ENCODE measurements at regions of chr4 and their contacts with region 1.

Region 1: GRCh38 chr4:78845472-78845871 is 69.3 kb downstream of the BMP2K start:
- DNase-seq: peak; percentile 7 to 59 (median 50)
- H3K4me3 ChIP-seq: peak overlapping the region in 2 of 7 experiments; percentile 28 to 59
- H3K27ac ChIP-seq: peak overlapping the region; percentile 47 to 73
- H3K4me1 ChIP-seq: peaks cover 0 to 4% (median 0%) of the 10 kb centered on the region in 4 experiments
- H3K27me3 ChIP-seq: no peaks in the 10 kb centered on the region

Region 2: DNA sequence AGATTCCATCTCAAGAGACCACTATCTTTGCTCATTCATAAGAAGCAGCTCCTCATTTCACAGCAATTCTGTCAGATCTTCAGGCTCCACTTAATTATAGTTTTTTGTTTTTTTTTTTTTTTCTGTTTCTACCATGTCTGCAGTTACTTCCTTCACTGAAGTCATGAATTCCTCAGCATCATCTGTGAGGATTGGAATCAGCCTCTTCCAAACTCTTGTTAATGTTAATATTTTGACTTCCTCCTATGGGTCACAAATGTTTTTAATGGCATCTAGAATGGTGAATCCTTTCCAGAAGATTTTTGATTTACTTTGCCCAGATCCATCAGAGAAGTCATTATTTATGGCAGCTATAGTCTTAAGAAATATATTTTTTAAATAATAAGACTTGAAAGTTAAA is 16.2 kb before region 1 on chr4:
- CTCF ChIA-PET with region 1: no interaction called
- POLR2A ChIA-PET with region 1: no interaction called
- DNase-seq: no peak
- H3K4me3 ChIP-seq: no peak overlapping the region
- H3K27ac ChIP-seq: no peak overlapping the region
- H3K4me1 ChIP-seq: no peaks in the 10 kb centered on the region
- H3K27me3 ChIP-seq: no peaks in the 10 kb centered on the region

Region 3: GRCh38 chr4:78864405-78865024 is 19.0 kb after region 1 on chr4:
- CTCF ChIA-PET with region 1: interaction called, 35 read pairs
- POLR2A ChIA-PET with region 1: no interaction called
- DNase-seq: peak; percentile 90 to 95 (median 93)
- H3K4me3 ChIP-seq: no peak overlapping the region
- H3K27ac ChIP-seq: no peak overlapping the region
- H3K4me1 ChIP-seq: peaks cover 0 to 2% (median 0%) of the 10 kb centered on the region in 4 experiments
- H3K27me3 ChIP-seq: no peaks in the 10 kb centered on the region

Region 4: GRCh38 chr4:78901882-78902281 is 56.4 kb after region 1 on chr4:
- CTCF ChIA-PET with region 1: no interaction called
- POLR2A ChIA-PET with region 1: no interaction called
- DNase-seq: no peak
- H3K4me3 ChIP-seq: no peak overlapping the region
- H3K27ac ChIP-seq: peak overlapping the region in 1 of 2 experiments; percentile 8
- H3K4me1 ChIP-seq: no peaks in the 10 kb centered on the region
- H3K27me3 ChIP-seq: no peaks in the 10 kb centered on the region

Measured in common myeloid progenitor, CD34-positive (primary cell).